ENCODE measurements at regions of chr1 and their contacts with region 1.

Region 1: DNA sequence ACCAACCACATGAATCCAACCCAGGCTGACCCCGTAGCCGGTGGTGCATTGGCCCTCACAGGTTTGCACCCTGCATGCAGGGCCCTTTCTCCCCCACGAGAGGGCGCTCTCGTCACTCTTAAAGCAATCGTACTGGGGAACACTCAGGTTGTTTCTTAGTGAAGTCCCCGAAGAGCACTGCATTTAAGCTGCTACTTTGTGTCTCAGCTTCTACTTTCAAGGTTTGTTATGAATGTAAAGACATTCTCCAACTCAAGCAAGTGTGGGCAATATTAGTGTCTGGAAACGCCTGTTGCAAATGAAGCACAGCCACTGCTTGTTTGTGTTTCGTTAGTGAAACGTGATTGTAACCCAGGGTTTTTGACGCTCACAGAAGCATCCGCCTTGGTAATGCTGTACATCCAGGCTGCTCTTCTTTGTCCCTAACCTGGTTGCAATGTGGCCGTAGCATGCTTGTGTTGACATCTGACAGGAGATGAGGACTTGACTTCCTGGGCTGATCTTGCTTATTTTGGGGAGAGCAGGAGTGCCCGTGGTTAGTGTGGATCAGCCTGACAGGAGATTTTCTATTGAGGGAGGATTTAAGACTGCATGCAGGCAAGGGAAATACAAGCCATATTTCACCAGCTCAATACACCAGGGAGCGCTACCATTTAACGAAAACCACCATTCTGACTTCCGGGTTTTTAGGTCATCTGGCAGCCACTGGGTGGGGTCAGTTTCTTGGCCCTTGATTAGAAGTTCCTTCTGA is 79.8 kb downstream of the ST6GALNAC3 start:
- DNase-seq: peak; percentile 90
- ATAC-seq: peak; percentile 96
- H3K4me3 Mint-ChIP-seq: peak overlapping the region; percentile 69
- H3K27ac Mint-ChIP-seq: peak overlapping the region; percentile 86
- H3K4me1 Mint-ChIP-seq: peaks cover 7% of the 10 kb centered on the region
- H3K27me3 Mint-ChIP-seq: no peaks in the 10 kb centered on the region

Region 2: GRCh38 chr1:76269155-76269554 is 114.8 kb after region 1 on chr1:
- CTCF ChIA-PET with region 1: no interaction called
- POLR2A ChIA-PET with region 1: no interaction called
- intact Hi-C with region 1: loop called in 1 of 2 experiments (anchors 10 kb)
- DNase-seq: no peak
- ATAC-seq: peak; percentile 70
- H3K4me3 Mint-ChIP-seq: no peak overlapping the region
- H3K27ac Mint-ChIP-seq: peak overlapping the region; percentile 69
- H3K4me1 Mint-ChIP-seq: peaks cover 51% of the 10 kb centered on the region
- H3K27me3 Mint-ChIP-seq: no peaks in the 10 kb centered on the region

Region 3: GRCh38 chr1:76330991-76331603 is 176.7 kb after region 1 on chr1:
- CTCF ChIA-PET with region 1: interaction called, 8 read pairs
- POLR2A ChIA-PET with region 1: no interaction called
- intact Hi-C with region 1: loop called (anchors 1 to 2 kb)
- DNase-seq: peak; percentile 58
- ATAC-seq: peak; percentile 91
- H3K4me3 Mint-ChIP-seq: no peak overlapping the region
- H3K27ac Mint-ChIP-seq: peak overlapping the region; percentile 63
- H3K4me1 Mint-ChIP-seq: peaks cover 8% of the 10 kb centered on the region
- H3K27me3 Mint-ChIP-seq: no peaks in the 10 kb centered on the region

Region 4: DNA sequence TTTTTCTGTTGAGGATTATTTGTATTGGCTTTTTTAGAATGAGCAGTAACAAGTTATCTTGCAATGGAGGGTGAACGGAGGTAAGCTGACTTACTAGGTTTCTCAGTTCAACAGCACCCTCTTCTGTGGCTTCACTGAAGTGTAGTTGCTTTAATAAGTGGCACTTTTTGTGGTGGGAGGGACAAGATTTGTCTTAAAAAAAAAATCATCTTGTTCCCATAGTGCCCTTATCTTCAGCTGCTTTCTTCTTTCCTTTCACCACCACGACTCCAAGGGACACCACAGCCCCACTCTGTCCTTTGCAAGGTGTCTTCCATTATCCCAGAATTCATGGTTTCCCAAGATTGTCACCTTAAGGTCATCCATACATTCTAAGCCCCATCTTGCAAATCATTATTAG is 971.9 kb after region 1 on chr1:
- CTCF ChIA-PET with region 1: interaction called, 6 read pairs
- POLR2A ChIA-PET with region 1: no interaction called
- intact Hi-C with region 1: loop called (anchors 1 to 5 kb)
- DNase-seq: peak; percentile 15
- ATAC-seq: peak; percentile 44
- H3K4me3 Mint-ChIP-seq: no peak overlapping the region
- H3K27ac Mint-ChIP-seq: no peak overlapping the region
- H3K4me1 Mint-ChIP-seq: no peaks in the 10 kb centered on the region
- H3K27me3 Mint-ChIP-seq: no peaks in the 10 kb centered on the region

Region 5: GRCh38 chr1:78114034-78114956 is 1959.9 kb after region 1 on chr1:
- CTCF ChIA-PET with region 1: no interaction called
- POLR2A ChIA-PET with region 1: no interaction called
- intact Hi-C with region 1: loop called in 1 of 2 experiments (anchors 10 kb)
- DNase-seq: peak; percentile 72
- ATAC-seq: peak; percentile 93
- H3K4me3 Mint-ChIP-seq: no peak overlapping the region
- H3K27ac Mint-ChIP-seq: no peak overlapping the region
- H3K4me1 Mint-ChIP-seq: peaks cover 5% of the 10 kb centered on the region
- H3K27me3 Mint-ChIP-seq: no peaks in the 10 kb centered on the region